Activated CD4-positive, alpha-beta memory T cell treated with anti-CD3 and anti-CD28 coated beads for 36 hours (primary cell): ENCODE measurements at regions of chr2 and their contacts with region 1.

Region 1: GRCh38 chr2:25165992-25166875 is 2.1 kb downstream of the POMC start:
- DNase-seq: peak; percentile 62
- H3K4me3 Mint-ChIP-seq: no peak overlapping the region
- H3K27ac Mint-ChIP-seq: no peak overlapping the region
- H3K4me1 Mint-ChIP-seq: peaks cover 16% of the 10 kb centered on the region
- H3K27me3 Mint-ChIP-seq: peaks cover 36% of the 10 kb centered on the region

Region 2: GRCh38 chr2:25194576-25195122 is 28.4 kb after region 1 on chr2:
- CTCF ChIA-PET with region 1: interaction called, 39 read pairs
- POLR2A ChIA-PET with region 1: no interaction called
- intact Hi-C with region 1: loop called (anchors 1 kb)
- DNase-seq: no peak
- H3K4me3 Mint-ChIP-seq: no peak overlapping the region
- H3K27ac Mint-ChIP-seq: no peak overlapping the region
- H3K4me1 Mint-ChIP-seq: no peaks in the 10 kb centered on the region
- H3K27me3 Mint-ChIP-seq: no peaks in the 10 kb centered on the region

Region 3: GRCh38 chr2:25201265-25201664 is 35.0 kb after region 1 on chr2:
- CTCF ChIA-PET with region 1: interaction called, 39 read pairs
- POLR2A ChIA-PET with region 1: no interaction called
- intact Hi-C with region 1: loop called (anchors 1 kb)
- DNase-seq: no peak
- H3K4me3 Mint-ChIP-seq: no peak overlapping the region
- H3K27ac Mint-ChIP-seq: no peak overlapping the region
- H3K4me1 Mint-ChIP-seq: peaks cover 6% of the 10 kb centered on the region
- H3K27me3 Mint-ChIP-seq: no peaks in the 10 kb centered on the region

Region 4: GRCh38 chr2:25228848-25229278 is 62.6 kb after region 1 on chr2:
- CTCF ChIA-PET with region 1: interaction called, 11 read pairs
- POLR2A ChIA-PET with region 1: no interaction called
- intact Hi-C with region 1: no loop called
- DNase-seq: peak; percentile 37
- H3K4me3 Mint-ChIP-seq: no peak overlapping the region
- H3K27ac Mint-ChIP-seq: no peak overlapping the region
- H3K4me1 Mint-ChIP-seq: peaks cover 9% of the 10 kb centered on the region
- H3K27me3 Mint-ChIP-seq: no peaks in the 10 kb centered on the region

Region 5: GRCh38 chr2:25521665-25522387 is 355.6 kb after region 1 on chr2:
- CTCF ChIA-PET with region 1: interaction called, 3 read pairs
- POLR2A ChIA-PET with region 1: no interaction called
- intact Hi-C with region 1: loop called (anchors 5 kb)
- DNase-seq: peak; percentile 12
- H3K4me3 Mint-ChIP-seq: no peak overlapping the region
- H3K27ac Mint-ChIP-seq: peak overlapping the region; percentile 26
- H3K4me1 Mint-ChIP-seq: peaks cover 9% of the 10 kb centered on the region
- H3K27me3 Mint-ChIP-seq: no peaks in the 10 kb centered on the region

Region 6: DNA sequence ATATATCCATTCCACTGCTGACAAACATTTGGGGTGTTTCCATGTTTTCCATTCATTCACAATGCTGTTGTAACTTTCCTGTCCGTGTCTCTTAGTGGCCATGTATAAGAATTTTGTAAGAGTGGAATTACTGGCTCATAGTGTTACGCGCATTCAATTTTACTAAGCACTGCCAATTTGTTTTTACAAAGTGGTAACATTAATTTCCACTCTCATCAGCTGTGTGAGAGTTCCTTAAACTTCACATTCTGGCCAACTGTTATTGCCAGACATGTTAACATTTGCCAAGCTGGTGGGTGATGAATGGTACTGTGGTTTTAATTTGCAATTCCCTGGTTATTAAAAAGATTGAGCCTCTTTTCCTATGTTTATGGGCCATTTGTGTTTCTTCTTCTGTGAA is 372.9 kb after region 1 on chr2:
- CTCF ChIA-PET with region 1: no interaction called
- POLR2A ChIA-PET with region 1: no interaction called
- intact Hi-C with region 1: no loop called
- DNase-seq: no peak
- H3K4me3 Mint-ChIP-seq: no peak overlapping the region
- H3K27ac Mint-ChIP-seq: no peak overlapping the region
- H3K4me1 Mint-ChIP-seq: no peaks in the 10 kb centered on the region
- H3K27me3 Mint-ChIP-seq: no peaks in the 10 kb centered on the region